CD4-positive, alpha-beta memory T cell (primary cell): ENCODE measurements at regions of chr7 and their contacts with region 1.

Region 1: DNA sequence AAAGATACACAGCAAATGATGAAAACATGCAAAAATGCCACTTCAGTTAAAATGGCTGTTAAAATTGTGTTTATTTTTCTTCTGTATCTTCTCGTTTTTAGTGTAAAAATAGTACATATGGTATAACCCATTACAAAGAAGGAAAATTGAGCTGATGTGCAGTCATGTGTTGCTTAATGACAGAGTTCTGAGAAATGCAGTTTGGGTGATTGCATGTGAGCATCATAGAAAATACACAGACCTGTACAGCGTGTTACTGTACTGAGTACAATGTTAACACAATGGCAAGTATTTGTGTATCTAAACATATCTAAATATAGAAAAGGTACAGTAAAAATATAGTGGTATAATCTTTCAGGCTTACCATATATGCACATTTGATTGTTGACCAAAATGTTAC is 7.3 kb downstream of the DMTF1 start:
- DNase-seq: no peak
- H3K4me3 ChIP-seq: no peak overlapping the region
- H3K4me3 Mint-ChIP-seq: no peak overlapping the region
- H3K27ac ChIP-seq: no peak overlapping the region
- H3K27ac Mint-ChIP-seq: no peak overlapping the region
- H3K4me1 ChIP-seq: peaks cover 68% of the 10 kb centered on the region
- H3K4me1 Mint-ChIP-seq: peaks cover 38 to 64% (median 53%) of the 10 kb centered on the region in 4 donors
- H3K27me3 ChIP-seq: no peaks in the 10 kb centered on the region
- H3K27me3 Mint-ChIP-seq: no peaks in the 10 kb centered on the region

Region 2: GRCh38 chr7:86328801-86329433 is 830.6 kb before region 1 on chr7:
- CTCF ChIA-PET with region 1: no interaction called
- POLR2A ChIA-PET with region 1: no interaction called
- intact Hi-C with region 1: no loop called
- DNase-seq: no peak
- H3K4me3 ChIP-seq: no peak overlapping the region
- H3K4me3 Mint-ChIP-seq: no peak overlapping the region
- H3K27ac ChIP-seq: no peak overlapping the region
- H3K27ac Mint-ChIP-seq: no peak overlapping the region
- H3K4me1 ChIP-seq: no peaks in the 10 kb centered on the region
- H3K4me1 Mint-ChIP-seq: no peaks in the 10 kb centered on the region
- H3K27me3 ChIP-seq: no peaks in the 10 kb centered on the region
- H3K27me3 Mint-ChIP-seq: no peaks in the 10 kb centered on the region

Region 3: GRCh38 chr7:87140271-87140748 is 19.2 kb before region 1 on chr7:
- CTCF ChIA-PET with region 1: no interaction called
- POLR2A ChIA-PET with region 1: no interaction called
- intact Hi-C with region 1: no loop called
- DNase-seq: no peak
- H3K4me3 ChIP-seq: no peak overlapping the region
- H3K4me3 Mint-ChIP-seq: no peak overlapping the region
- H3K27ac ChIP-seq: no peak overlapping the region
- H3K27ac Mint-ChIP-seq: no peak overlapping the region
- H3K4me1 ChIP-seq: no peaks in the 10 kb centered on the region
- H3K4me1 Mint-ChIP-seq: peaks cover 0 to 6% (median 2%) of the 10 kb centered on the region in 4 donors
- H3K27me3 ChIP-seq: peaks cover 6% of the 10 kb centered on the region
- H3K27me3 Mint-ChIP-seq: peaks cover 11 to 13% of the 10 kb centered on the region in 2 donors

Region 4: DNA sequence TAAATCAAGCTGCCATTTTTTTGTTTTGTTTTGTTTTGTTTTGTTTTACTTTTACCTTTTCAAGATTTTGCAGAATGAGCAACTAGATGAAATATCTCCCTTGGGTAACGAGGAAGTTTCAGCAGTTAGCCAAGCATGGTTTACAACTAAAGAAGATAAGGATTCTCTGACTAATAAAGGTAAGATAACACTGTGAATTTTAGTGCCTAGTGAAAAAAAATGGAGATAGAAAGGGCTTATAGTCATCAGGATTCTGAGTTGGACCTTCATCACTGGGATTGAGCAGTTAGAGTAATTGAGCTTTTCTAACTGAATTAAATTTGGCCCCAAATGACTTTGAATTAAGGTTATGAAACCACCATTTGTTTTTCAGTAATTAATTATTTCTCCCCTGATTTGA is 13.9 kb after region 1 on chr7:
- CTCF ChIA-PET with region 1: interaction called, 3 read pairs
- POLR2A ChIA-PET with region 1: interaction called, 3 read pairs
- intact Hi-C with region 1: loop called (anchors 2 kb)
- DNase-seq: no peak
- H3K4me3 ChIP-seq: no peak overlapping the region
- H3K4me3 Mint-ChIP-seq: no peak overlapping the region
- H3K27ac ChIP-seq: no peak overlapping the region
- H3K27ac Mint-ChIP-seq: peak overlapping the region in 5 of 7 donors; percentile 30 to 86 (median 49)
- H3K4me1 ChIP-seq: no peaks in the 10 kb centered on the region
- H3K4me1 Mint-ChIP-seq: peaks cover 20 to 34% (median 29%) of the 10 kb centered on the region in 4 donors
- H3K27me3 ChIP-seq: no peaks in the 10 kb centered on the region
- H3K27me3 Mint-ChIP-seq: no peaks in the 10 kb centered on the region